ENCODE measurements at regions of chr14 and their contacts with region 1.

Region 1: GRCh38 chr14:20873370-20874177 is 17.6 kb upstream of the RNASE3 start:
- H3K4me3 Mint-ChIP-seq: peak overlapping the region; percentile 55
- H3K27ac Mint-ChIP-seq: peak overlapping the region; percentile 68
- H3K4me1 Mint-ChIP-seq: peaks cover 42% of the 10 kb centered on the region
- H3K27me3 Mint-ChIP-seq: no peaks in the 10 kb centered on the region

Region 2: DNA sequence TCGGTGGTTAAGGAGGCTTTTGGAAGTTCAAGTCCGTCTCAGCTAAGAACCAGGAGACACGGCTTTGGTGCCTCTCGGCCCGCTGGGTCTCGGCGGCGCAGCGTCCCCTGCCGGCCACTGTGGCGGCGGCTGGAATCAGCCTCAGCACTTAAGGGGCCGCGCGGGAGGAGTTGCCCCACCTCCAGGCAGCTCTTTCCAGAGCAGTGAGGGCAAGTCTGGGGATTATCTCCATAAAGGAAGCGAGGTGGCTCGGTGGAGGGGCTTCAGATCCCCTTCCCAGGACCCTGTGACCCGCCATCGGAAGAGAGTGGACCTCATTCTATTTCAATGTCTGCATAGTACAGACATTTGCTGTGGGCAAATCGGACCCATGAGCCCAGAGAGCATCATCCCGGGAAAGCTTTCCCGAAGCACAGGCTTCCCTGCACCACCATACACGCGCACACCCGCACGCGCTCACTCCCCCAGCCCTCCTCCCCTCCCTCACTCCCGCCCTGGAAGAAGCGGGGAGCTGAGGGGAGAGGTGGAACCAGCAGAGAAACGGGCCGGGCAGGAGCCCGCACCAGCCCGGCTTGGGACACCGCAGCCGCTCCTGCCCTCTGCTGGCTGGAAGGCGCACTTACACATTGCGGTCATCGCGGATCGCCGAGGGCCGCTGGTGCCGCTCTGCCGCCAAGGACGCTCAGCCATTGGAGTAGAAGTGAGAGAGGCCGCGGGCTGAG is 97.6 kb after region 1 on chr14:
- intact Hi-C with region 1: loop called (anchors 5 kb)
- H3K4me3 Mint-ChIP-seq: peak overlapping the region; percentile 84
- H3K27ac Mint-ChIP-seq: peak overlapping the region; percentile 68
- H3K4me1 Mint-ChIP-seq: peaks cover 25% of the 10 kb centered on the region
- H3K27me3 Mint-ChIP-seq: no peaks in the 10 kb centered on the region